HepG2 (cell line): ENCODE measurements at regions of chr4 and their contacts with region 1.

Region 1: GRCh38 chr4:83771113-83771705 is 235.3 kb downstream of the GPAT3 start:
- DNase-seq: peak; percentile 21
- ATAC-seq: peak; percentile 95
- H3K4me3 ChIP-seq: no peak overlapping the region
- H3K27ac ChIP-seq: no peak overlapping the region
- H3K4me1 ChIP-seq: no peaks in the 10 kb centered on the region
- H3K27me3 ChIP-seq: no peaks in the 10 kb centered on the region
- CTCF ChIP-seq: peak; percentile 73
- EP300 ChIP-seq: no peak
- POLR2A ChIP-seq: no peak
- RAD21 ChIP-seq: peak; percentile 55; the same call in 1 of the 2 replicates

Region 2: DNA sequence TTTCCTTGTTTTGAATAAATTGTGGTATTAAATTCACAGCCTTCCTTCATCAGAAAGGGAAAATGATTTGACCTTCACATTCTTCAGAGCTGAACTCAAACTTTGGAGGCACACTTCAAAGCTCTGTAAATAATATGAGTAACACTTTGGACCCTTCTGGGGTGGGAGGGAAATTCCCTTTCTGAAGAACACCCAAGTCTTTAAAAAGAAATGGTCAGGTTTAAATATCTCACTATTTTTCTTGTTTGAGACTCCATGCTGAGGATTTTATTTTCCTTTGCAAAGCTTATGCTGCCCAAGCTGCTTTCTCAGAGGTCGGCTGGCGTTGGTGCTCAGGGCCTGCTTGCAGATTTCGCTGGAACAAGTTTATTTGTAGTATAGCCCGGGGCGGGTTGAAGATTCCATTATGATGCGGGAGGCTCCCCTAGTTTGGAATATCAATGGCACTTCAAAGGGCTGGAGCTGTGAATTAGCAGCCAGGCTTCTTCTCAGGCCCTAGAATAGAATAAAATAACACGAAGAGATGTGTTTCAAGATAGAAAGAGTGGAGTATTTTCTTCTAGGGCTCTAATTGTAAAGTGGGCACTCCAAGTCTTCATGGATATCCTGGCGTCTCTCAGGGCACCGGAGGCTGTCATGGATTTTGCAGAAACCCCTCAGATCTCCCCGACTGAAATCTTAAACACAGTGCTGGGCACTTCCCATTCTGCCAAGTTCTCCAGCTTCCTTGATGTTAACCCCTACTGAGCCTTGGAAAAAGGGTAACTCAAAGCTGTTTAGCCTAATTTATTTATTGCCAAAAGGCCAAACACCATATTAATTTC is 80.3 kb after region 1 on chr4:
- CTCF ChIA-PET with region 1: no interaction called
- POLR2A ChIA-PET with region 1: no interaction called
- in situ Hi-C with region 1: no loop called
- intact Hi-C with region 1: loop called (anchors 5 kb)
- DNase-seq: peak; percentile 86
- ATAC-seq: peak; percentile 83
- H3K4me3 ChIP-seq: peak overlapping the region; percentile 8 to 48 (median 21); a peak in 4 of 6 replicates
- H3K27ac ChIP-seq: peak overlapping the region; percentile 52
- H3K4me1 ChIP-seq: peaks cover 40% of the 10 kb centered on the region
- H3K27me3 ChIP-seq: no peaks in the 10 kb centered on the region
- CTCF ChIP-seq: no peak
- EP300 ChIP-seq: peak in 1 of 2 experiments; percentile 75; a peak in 2 of 4 replicates
- POLR2A ChIP-seq: no peak
- RAD21 ChIP-seq: no peak

Region 3: GRCh38 chr4:83961575-83961974 is 190.4 kb after region 1 on chr4:
- CTCF ChIA-PET with region 1: interaction called, 13 read pairs
- POLR2A ChIA-PET with region 1: no interaction called
- in situ Hi-C with region 1: no loop called
- intact Hi-C with region 1: loop called (anchors 1 kb)
- DNase-seq: no peak
- ATAC-seq: no peak
- H3K4me3 ChIP-seq: no peak overlapping the region
- H3K27ac ChIP-seq: no peak overlapping the region
- H3K4me1 ChIP-seq: no peaks in the 10 kb centered on the region
- H3K27me3 ChIP-seq: no peaks in the 10 kb centered on the region
- CTCF ChIP-seq: no peak
- EP300 ChIP-seq: no peak
- POLR2A ChIP-seq: no peak
- RAD21 ChIP-seq: no peak

Region 4: DNA sequence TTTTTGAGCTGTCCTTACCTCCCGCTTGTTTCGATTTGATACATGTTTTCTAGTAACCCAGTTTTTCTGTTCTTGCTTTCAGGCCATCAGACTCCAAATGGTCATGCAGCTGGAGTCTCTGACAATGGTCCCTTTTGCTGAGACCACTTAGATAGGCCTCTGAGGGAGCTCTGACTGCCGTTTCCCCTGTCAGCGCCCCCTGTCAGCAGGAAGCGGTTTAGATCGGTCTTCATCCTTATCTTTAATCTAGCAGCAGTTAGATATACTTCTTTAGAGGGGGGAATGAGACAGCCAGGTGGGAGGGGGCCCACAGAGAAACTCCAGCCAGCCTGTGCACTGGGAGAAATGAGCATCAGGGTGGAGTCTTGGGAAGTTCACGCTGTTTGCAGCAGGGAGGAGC is 222.6 kb after region 1 on chr4:
- CTCF ChIA-PET with region 1: no interaction called
- POLR2A ChIA-PET with region 1: no interaction called
- in situ Hi-C with region 1: no loop called
- intact Hi-C with region 1: loop called (anchors 1 kb)
- DNase-seq: no peak
- ATAC-seq: peak; percentile 75
- H3K4me3 ChIP-seq: no peak overlapping the region
- H3K27ac ChIP-seq: no peak overlapping the region
- H3K4me1 ChIP-seq: no peaks in the 10 kb centered on the region
- H3K27me3 ChIP-seq: no peaks in the 10 kb centered on the region; a peak in 1 of 5 replicates
- CTCF ChIP-seq: peak; percentile 42
- EP300 ChIP-seq: no peak
- POLR2A ChIP-seq: no peak
- RAD21 ChIP-seq: no peak

Region 5: DNA sequence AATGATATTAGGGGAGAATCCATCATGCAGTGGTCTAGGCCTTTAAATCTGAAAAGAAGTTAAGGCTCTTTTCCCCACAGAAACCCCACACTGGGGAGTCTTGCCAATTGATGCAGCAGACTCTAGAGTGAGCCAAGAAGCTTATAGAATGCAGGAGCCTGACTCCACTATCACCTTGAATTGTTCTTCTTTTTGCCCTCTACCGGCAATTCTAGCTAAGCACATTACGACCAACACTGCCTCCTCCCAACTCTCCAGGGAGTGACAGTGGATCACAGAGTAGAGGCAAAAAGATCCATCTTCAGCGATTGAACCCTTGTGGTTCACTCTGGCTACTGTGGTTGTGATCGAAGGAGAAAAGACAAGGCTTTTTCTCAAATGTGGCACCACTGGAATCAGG is 396.4 kb after region 1 on chr4:
- CTCF ChIA-PET with region 1: no interaction called
- POLR2A ChIA-PET with region 1: no interaction called
- in situ Hi-C with region 1: no loop called
- intact Hi-C with region 1: loop called (anchors 5 kb)
- DNase-seq: peak; percentile 3
- ATAC-seq: peak; percentile 89
- H3K4me3 ChIP-seq: no peak overlapping the region
- H3K27ac ChIP-seq: no peak overlapping the region
- H3K4me1 ChIP-seq: no peaks in the 10 kb centered on the region
- H3K27me3 ChIP-seq: no peaks in the 10 kb centered on the region
- CTCF ChIP-seq: peak; percentile 37; the same call in 1 of the 2 replicates
- EP300 ChIP-seq: no peak
- POLR2A ChIP-seq: no peak
- RAD21 ChIP-seq: no peak

Region 6: DNA sequence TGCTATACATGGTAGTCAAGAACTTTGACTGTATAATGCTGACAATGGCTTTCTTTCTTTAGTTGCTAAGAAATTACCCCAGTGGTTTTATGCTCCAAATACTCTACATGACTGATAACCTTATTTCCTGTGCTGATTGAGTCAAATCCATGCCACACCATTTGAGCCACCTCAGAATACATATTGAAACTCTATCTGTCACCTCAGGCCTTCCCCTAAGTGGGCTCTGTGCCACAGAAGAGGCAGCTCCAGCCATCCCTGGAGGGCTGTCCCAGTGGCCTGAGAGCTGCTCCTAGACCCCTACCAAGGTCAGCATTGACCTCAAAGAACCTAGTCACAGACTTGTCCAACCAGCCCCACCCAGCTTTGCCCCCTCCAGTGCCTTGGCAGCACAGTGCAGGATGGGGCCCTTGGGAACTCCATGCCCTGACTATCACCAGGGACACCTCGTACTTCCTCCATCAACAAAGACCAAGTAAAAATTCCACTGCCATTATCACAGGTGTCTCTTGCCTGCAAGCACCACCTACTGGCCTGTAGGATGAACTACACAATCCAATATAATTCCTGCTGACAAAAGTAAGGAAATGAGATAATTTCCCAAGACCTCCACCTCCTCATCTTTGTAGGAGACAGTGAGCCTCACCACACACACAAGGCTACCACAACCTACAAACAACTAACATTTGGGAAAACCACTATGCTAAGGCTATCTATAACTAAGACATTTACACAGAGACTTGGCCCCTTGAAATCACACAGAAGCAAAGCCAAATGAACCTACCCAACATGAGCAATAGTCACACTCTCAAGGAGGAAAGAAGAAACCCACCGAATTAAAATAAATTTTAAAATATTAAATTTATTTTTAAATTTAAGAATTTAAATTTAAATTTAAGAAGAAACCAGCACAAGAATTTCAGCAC is 488.0 kb after region 1 on chr4:
- CTCF ChIA-PET with region 1: interaction called, 16 read pairs
- POLR2A ChIA-PET with region 1: no interaction called
- in situ Hi-C with region 1: loop called (anchors 25 kb)
- intact Hi-C with region 1: loop called (anchors 1 kb)
- DNase-seq: peak; percentile 11
- ATAC-seq: peak; percentile 70
- H3K4me3 ChIP-seq: no peak overlapping the region
- H3K27ac ChIP-seq: no peak overlapping the region
- H3K4me1 ChIP-seq: no peaks in the 10 kb centered on the region
- H3K27me3 ChIP-seq: no peaks in the 10 kb centered on the region
- CTCF ChIP-seq: peak; percentile 71
- EP300 ChIP-seq: no peak
- POLR2A ChIP-seq: no peak
- RAD21 ChIP-seq: no peak

Region 7: GRCh38 chr4:84503495-84504437 is 732.6 kb after region 1 on chr4:
- CTCF ChIA-PET with region 1: interaction called, 8 read pairs
- POLR2A ChIA-PET with region 1: no interaction called
- in situ Hi-C with region 1: no loop called
- intact Hi-C with region 1: loop called (anchors 1 kb)
- DNase-seq: peak; percentile 46
- ATAC-seq: peak; percentile 98
- H3K4me3 ChIP-seq: no peak overlapping the region
- H3K27ac ChIP-seq: no peak overlapping the region
- H3K4me1 ChIP-seq: 0 out of 2 replicates have a peak, but pooled peaks cover 2% of the 10 kb centered on the region
- H3K27me3 ChIP-seq: peaks cover 4 to 50% of the 10 kb centered on the region in 2 experiments; a peak in 4 of 5 replicates
- CTCF ChIP-seq: peak; percentile 82
- EP300 ChIP-seq: no peak
- POLR2A ChIP-seq: no peak
- RAD21 ChIP-seq: peak; percentile 47; the same call in 1 of the 2 replicates